ENCODE measurements at regions of chr1 and their contacts with region 1.

Region 1: DNA sequence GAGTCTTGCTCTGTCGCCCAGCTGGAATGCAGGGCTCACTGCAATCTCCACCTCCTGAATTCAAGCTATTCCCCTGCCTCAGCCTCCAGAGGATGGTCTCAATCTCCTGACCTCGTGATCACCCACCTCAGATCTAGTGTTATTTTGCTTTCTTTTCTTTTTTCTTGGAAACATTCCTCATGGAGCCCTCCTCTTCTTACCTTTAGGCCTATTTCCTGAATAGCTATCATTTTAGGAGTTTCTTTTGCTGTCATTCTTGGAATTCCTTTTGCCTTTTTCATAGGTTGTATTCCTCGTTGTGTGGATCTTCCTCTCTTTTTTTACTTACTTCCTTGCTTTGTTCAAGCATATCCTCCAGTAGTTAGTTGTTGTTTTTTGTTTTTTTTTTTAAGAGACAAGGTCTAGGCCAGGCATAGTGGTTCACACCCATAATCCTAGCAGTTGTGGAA is 173.8 kb downstream of the RASAL2 start:
- DNase-seq: peak; percentile 66 to 90
- H3K4me3 ChIP-seq: no peak overlapping the region
- H3K27ac ChIP-seq: peak overlapping the region; percentile 78
- H3K4me1 ChIP-seq: peaks cover 29% of the 10 kb centered on the region
- H3K27me3 ChIP-seq: no peaks in the 10 kb centered on the region
- CTCF ChIP-seq: no peak

Region 2: GRCh38 chr1:178189814-178190213 is 77.9 kb before region 1 on chr1:
- CTCF ChIA-PET with region 1: no interaction called
- POLR2A ChIA-PET with region 1: interaction called, 18 read pairs
- intact Hi-C with region 1: loop called (anchors 2 kb)
- DNase-seq: no peak
- H3K4me3 ChIP-seq: no peak overlapping the region
- H3K27ac ChIP-seq: no peak overlapping the region
- H3K4me1 ChIP-seq: peaks cover 8% of the 10 kb centered on the region; the same call in 1 of the 2 replicates
- H3K27me3 ChIP-seq: no peaks in the 10 kb centered on the region
- CTCF ChIP-seq: peak; percentile 52

Region 3: DNA sequence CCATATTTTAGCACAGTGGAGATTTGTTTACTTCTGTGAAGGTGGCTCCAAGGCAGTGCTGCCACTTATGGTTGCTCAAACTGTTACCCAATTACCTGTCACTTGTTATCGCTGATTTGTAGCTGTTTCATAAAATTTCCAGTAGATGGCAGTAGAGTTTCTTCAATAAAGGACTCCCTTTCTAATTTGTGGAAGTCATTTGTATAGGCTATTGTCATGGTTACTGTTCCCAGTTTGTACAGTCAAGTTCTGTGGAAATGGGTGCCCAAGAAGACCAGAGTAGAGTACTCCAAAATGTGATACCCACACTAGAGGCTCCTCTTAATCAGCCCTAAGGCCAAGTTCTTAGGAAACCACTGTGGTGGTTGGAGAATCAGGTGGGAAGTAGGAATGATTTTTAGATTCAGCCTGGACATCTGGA is 43.0 kb after region 1 on chr1:
- CTCF ChIA-PET with region 1: no interaction called
- POLR2A ChIA-PET with region 1: no interaction called
- intact Hi-C with region 1: no loop called
- DNase-seq: peak; percentile 15 to 86
- H3K4me3 ChIP-seq: no peak overlapping the region
- H3K27ac ChIP-seq: no peak overlapping the region
- H3K4me1 ChIP-seq: peaks cover 34% of the 10 kb centered on the region
- H3K27me3 ChIP-seq: no peaks in the 10 kb centered on the region
- CTCF ChIP-seq: peak; percentile 88

Measured in PC-9 (cell line).